ENCODE measurements at regions of chr11 and their contacts with region 1.

Region 1: DNA sequence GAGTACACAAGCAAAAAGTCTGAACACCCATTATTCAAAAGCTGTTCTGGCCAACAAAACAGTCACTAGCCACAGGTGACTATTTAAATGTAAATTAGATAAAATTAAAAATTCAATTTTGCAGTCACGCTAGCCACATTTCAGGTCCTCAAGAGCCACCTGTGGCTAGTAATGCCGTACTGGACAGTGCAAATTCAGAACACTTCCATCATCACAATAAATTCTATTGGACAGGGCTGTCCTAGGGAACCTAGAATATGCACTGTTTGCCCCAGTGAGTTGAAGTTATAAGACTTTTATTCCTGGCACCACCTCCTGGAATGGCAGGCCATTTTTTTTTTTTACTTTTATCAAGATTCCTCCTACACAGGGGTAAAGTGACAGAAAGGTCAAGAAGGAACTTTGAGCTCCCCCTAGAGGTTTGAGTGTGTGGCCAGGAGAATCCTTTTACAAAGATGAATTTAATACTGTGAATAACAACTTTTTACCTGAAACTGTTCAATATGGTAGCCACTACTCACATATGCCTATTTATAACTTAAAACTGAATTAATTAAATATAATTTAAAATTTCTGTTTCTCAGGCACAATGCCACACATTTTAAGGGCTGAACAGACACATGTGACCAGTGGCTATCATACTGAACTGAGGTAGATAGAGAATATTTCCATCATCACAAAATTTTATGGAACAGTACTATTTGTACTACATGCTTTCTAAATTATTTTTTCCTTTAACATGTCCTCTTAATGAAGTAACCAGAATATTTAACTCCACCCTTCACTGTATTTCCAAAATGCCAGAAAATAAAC is 6.5 kb downstream of the MSANTD2 start:
- DNase-seq: peak; percentile 43
- ATAC-seq: peak; percentile 93
- H3K4me3 ChIP-seq: no peak overlapping the region
- H3K27ac ChIP-seq: no peak overlapping the region
- H3K4me1 ChIP-seq: peaks cover 3 to 14% of the 10 kb centered on the region in 2 experiments; a peak in 3 of 4 replicates
- H3K27me3 ChIP-seq: no peaks in the 10 kb centered on the region
- CTCF ChIP-seq: peak; percentile 69 to 87 (median 73); a peak in 5 of 6 replicates
- POLR2A ChIP-seq: no peak
- RAD21 ChIP-seq: peak; percentile 77

Region 2: DNA sequence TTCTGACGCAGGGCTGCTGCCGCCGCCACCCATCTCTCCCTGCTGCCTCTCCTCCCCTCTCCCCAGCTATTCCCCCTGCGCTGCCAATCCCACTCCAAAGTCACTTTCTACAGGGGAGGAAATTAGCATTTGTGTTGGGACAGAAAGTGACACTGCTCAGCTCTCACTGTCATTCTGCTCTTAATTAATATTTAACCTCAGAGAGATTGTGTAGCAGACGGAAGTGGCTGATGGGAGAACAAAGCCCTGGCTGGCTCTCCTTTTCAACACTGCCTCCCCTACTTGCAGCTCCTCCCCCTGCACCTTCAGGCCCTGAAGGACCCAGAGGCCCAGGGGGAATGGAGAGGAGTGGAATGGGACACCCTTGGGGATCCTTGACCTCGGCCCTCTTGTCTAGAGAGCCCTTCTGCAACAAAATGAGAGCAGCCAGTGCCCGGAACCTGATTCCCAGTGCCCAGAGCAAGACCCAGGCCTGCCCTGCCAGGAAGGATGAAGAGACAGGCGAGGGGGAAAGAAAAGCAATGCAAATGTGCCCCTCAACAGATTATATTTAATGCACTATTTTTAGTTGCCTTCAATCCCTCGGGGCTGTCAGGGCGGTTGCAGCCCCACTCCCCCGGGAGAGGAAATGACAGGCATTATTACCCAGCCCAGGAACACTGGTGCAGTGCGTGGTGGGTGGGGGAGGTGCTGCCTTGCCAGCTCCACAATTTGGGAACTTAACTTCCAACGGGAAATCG is 68.5 kb before region 1 on chr11:
- CTCF ChIA-PET with region 1: no interaction called
- POLR2A ChIA-PET with region 1: no interaction called
- RAD21 ChIA-PET with region 1: no interaction called
- intact Hi-C with region 1: no loop called
- DNase-seq: no peak
- ATAC-seq: no peak
- H3K4me3 ChIP-seq: no peak overlapping the region
- H3K27ac ChIP-seq: no peak overlapping the region
- H3K4me1 ChIP-seq: no peaks in the 10 kb centered on the region
- H3K27me3 ChIP-seq: peaks cover 58% of the 10 kb centered on the region
- CTCF ChIP-seq: no peak
- POLR2A ChIP-seq: no peak
- RAD21 ChIP-seq: no peak

Region 3: GRCh38 chr11:124769801-124770639 is 23.7 kb before region 1 on chr11:
- CTCF ChIA-PET with region 1: interaction called, 27 read pairs
- POLR2A ChIA-PET with region 1: no interaction called
- RAD21 ChIA-PET with region 1: no interaction called
- intact Hi-C with region 1: no loop called
- DNase-seq: peak; percentile 35
- ATAC-seq: peak; percentile 66
- H3K4me3 ChIP-seq: peak overlapping the region in 1 of 2 experiments; percentile 39; a peak in 3 of 4 replicates
- H3K27ac ChIP-seq: peak overlapping the region; percentile 75
- H3K4me1 ChIP-seq: peaks cover 38 to 49% of the 10 kb centered on the region in 2 experiments
- H3K27me3 ChIP-seq: no peaks in the 10 kb centered on the region
- CTCF ChIP-seq: no peak
- POLR2A ChIP-seq: no peak
- RAD21 ChIP-seq: no peak

Region 4: GRCh38 chr11:124778281-124778680 is 15.4 kb before region 1 on chr11:
- CTCF ChIA-PET with region 1: interaction called, 27 read pairs
- POLR2A ChIA-PET with region 1: no interaction called
- RAD21 ChIA-PET with region 1: no interaction called
- intact Hi-C with region 1: no loop called
- DNase-seq: peak; percentile 8
- ATAC-seq: peak; percentile 84
- H3K4me3 ChIP-seq: no peak overlapping the region
- H3K27ac ChIP-seq: no peak overlapping the region
- H3K4me1 ChIP-seq: peaks cover under 1 to 8% of the 10 kb centered on the region in 2 experiments; a peak in 2 of 4 replicates
- H3K27me3 ChIP-seq: no peaks in the 10 kb centered on the region
- CTCF ChIP-seq: peak; percentile 48 to 56 (median 49); a peak in 5 of 6 replicates
- POLR2A ChIP-seq: no peak
- RAD21 ChIP-seq: peak; percentile 54

Region 5: GRCh38 chr11:124953753-124954589 is 160.3 kb after region 1 on chr11 and contains the start of gene CCDC15:
- CTCF ChIA-PET with region 1: no interaction called
- POLR2A ChIA-PET with region 1: no interaction called
- RAD21 ChIA-PET with region 1: no interaction called
- intact Hi-C with region 1: no loop called
- DNase-seq: peak; percentile 94
- ATAC-seq: peak; percentile 98
- H3K4me3 ChIP-seq: peak within 1 kb of the TSS; percentile 68 to 82
- H3K27ac ChIP-seq: peak within 1 kb of the TSS; percentile 64
- H3K4me1 ChIP-seq: peaks cover 7 to 17% of the 10 kb centered on the region in 2 experiments
- H3K27me3 ChIP-seq: no peaks in the 10 kb centered on the region
- CTCF ChIP-seq: no peak
- POLR2A ChIP-seq: peak; percentile 86
- RAD21 ChIP-seq: no peak; the same call in 1 of the 2 replicates
- total RNA-seq, gene CCDC15: 2.4 TPM

Measured in HCT116 (cell line).